Activated CD4-positive, alpha-beta T cell treated with anti-CD3 and anti-CD28 coated beads, Interleukin-2, amount 10 ng/mL, durations not matched to agents 7 days and 5 days (primary cell): ENCODE measurements at regions of chr15 and their contacts with region 1.

Region 1: GRCh38 chr15:40338041-40338657 is 2.6 kb downstream of the CCDC9B start:
- DNase-seq: peak; percentile 82
- H3K4me3 Mint-ChIP-seq: no peak overlapping the region
- H3K27ac Mint-ChIP-seq: peak overlapping the region; percentile 15
- H3K4me1 Mint-ChIP-seq: peaks cover 24% of the 10 kb centered on the region
- H3K27me3 Mint-ChIP-seq: no peaks in the 10 kb centered on the region

Region 2: DNA sequence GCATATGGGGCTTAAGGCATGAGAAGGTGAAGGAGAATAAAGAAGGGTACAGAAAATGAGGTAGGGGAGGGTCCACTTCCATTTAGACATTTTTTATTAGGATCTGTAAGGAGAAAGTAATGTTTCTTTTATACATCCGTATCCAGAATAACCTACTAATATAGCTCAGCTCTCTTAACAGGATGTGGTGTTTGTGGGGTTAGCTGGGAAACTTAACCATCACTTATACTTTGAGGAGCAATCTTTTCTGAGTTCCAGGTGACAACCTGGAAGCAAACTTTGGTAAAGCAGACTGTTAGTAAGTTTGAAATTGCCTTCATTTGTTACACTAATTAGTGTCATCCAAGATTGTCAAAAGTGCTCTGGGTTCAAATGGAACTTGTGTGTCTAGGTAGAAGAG is 140.7 kb before region 1 on chr15:
- CTCF ChIA-PET with region 1: no interaction called
- POLR2A ChIA-PET with region 1: no interaction called
- DNase-seq: peak; percentile 34
- H3K4me3 Mint-ChIP-seq: peak overlapping the region; percentile 24
- H3K27ac Mint-ChIP-seq: peak overlapping the region; percentile 32
- H3K4me1 Mint-ChIP-seq: peaks cover 46% of the 10 kb centered on the region
- H3K27me3 Mint-ChIP-seq: no peaks in the 10 kb centered on the region

Region 3: GRCh38 chr15:40307421-40308211 is 30.5 kb before region 1 on chr15 and contains the start of gene PLCB2:
- CTCF ChIA-PET with region 1: interaction called, 45 read pairs
- POLR2A ChIA-PET with region 1: no interaction called
- DNase-seq: peak; percentile 79
- H3K4me3 Mint-ChIP-seq: peak within 1 kb of the TSS; percentile 99
- H3K27ac Mint-ChIP-seq: peak within 1 kb of the TSS; percentile 98
- H3K4me1 Mint-ChIP-seq: peaks cover 42% of the 10 kb centered on the region
- H3K27me3 Mint-ChIP-seq: peaks cover 7% of the 10 kb centered on the region
- total RNA-seq, gene PLCB2: 195 to 196 TPM

Region 4: GRCh38 chr15:40323239-40323952 is 14.8 kb before region 1 on chr15 and contains the start of gene INAFM2:
- CTCF ChIA-PET with region 1: interaction called, 78 read pairs
- POLR2A ChIA-PET with region 1: interaction called, 3 read pairs
- DNase-seq: peak; percentile 90
- H3K4me3 Mint-ChIP-seq: peak within 1 kb of the TSS; percentile 70
- H3K27ac Mint-ChIP-seq: no peak within 1 kb of the TSS
- H3K4me1 Mint-ChIP-seq: peaks cover 29% of the 10 kb centered on the region
- H3K27me3 Mint-ChIP-seq: peaks cover 12% of the 10 kb centered on the region
- total RNA-seq, gene INAFM2: 6.6 to 8.5 TPM

Region 5: DNA sequence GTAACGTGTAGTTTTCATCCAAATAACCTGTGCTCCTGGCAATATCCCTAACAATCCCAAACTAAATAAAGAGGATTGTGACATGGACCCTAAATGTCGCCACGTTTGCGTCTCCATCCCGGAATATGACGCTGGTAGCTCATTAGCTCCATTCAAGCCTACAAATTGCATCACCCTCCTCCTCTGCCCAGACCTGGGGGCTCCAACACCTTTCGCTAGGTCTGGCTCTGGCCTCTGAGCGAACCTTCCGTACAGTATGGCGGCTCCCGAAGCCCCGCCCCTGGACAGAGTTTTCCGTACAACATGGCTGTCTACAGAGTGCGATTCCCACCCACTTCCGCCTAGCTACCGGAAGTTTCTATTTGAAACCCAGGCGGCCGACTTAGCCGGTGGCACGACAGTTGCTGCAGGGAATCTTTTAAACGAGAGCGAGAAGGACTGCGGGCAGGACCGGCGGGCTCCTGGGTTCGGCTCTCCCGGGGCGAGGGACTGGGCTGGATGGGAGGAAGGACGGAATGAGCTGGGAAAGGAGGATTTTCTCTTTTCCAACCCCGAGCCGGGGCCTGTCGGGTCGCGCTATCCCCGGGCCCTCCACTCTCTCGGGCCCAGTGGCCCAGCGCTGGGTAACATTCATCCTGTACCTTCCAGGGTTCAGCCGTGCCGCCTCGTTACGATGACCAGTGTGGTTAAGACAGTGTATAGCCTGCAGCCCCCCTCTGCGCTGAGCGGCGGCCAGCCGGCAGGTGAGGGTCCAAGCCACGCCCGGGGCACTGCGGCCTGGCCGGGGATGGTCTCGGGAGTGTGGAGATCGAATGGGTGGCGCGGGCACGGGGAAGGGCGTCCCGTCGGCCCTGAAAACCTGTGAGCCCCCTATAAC is 44.7 kb after region 1 on chr15 and contains the start of gene KNSTRN:
- CTCF ChIA-PET with region 1: interaction called, 15 read pairs
- POLR2A ChIA-PET with region 1: no interaction called
- DNase-seq: peak; percentile 96
- H3K4me3 Mint-ChIP-seq: peak within 1 kb of the TSS; percentile 100
- H3K27ac Mint-ChIP-seq: peak within 1 kb of the TSS; percentile 95
- H3K4me1 Mint-ChIP-seq: peaks cover 36% of the 10 kb centered on the region
- H3K27me3 Mint-ChIP-seq: peaks cover 4% of the 10 kb centered on the region
- total RNA-seq, gene KNSTRN: 57.5 to 63.3 TPM

Region 6: GRCh38 chr15:40421246-40422157 is 83.4 kb after region 1 on chr15:
- CTCF ChIA-PET with region 1: interaction called, 33 read pairs
- POLR2A ChIA-PET with region 1: no interaction called
- DNase-seq: peak; percentile 81
- H3K4me3 Mint-ChIP-seq: no peak overlapping the region
- H3K27ac Mint-ChIP-seq: no peak overlapping the region
- H3K4me1 Mint-ChIP-seq: peaks cover 2% of the 10 kb centered on the region
- H3K27me3 Mint-ChIP-seq: no peaks in the 10 kb centered on the region